H1 (cell line): ENCODE measurements at regions of chr9 and their contacts with region 1.

Region 1: DNA sequence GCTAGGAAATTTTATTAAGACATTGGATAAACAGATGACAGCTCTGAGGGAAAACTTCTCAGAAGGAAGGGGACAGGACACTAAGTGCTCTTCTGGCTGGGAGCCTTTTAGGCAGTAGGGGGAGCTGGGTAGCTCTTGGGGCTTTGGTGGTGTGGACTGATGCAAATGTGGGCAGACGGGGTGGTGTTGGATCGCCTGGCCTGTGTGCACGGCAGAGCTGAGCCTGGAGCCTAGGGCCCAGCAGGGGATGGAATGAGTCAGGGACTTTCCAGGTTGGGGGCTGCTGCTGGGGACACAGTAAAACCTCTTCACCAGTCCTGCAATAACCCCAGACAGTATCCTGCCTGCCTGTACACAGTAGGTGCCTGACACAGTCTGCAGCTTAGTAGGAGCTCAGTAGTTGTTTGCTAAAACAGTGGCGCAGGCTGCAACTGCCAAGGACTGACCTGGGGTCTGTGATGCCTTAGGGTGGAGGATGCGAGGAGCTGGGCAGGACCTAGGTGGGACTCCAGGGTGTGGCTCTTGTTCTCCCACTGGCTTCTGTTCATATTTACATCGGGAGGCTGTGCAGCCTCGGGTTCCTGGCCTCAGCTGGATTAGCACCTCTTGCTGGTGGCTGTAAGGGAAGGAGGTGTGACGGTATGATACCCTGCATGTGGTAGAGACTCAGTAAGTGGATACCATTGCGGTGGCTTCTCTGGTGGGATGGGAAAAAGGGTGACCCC is 83.8 kb downstream of the DAB2IP start:
- DNase-seq: peak; percentile 71
- H3K4me3 ChIP-seq: peak overlapping the region in 3 of 4 experiments; percentile 52 to 73 (median 56); a peak in 5 of 8 replicates
- H3K27ac ChIP-seq: no peak overlapping the region
- H3K4me1 ChIP-seq: peaks cover 12 to 42% (median 34%) of the 10 kb centered on the region in 4 experiments
- H3K27me3 ChIP-seq: peaks cover 0 to 8% (median 4%) of the 10 kb centered on the region in 4 experiments; a peak in 4 of 7 replicates
- CTCF ChIP-seq: peak; percentile 67 to 80 (median 77)
- EP300 ChIP-seq: no peak
- POLR2A ChIP-seq: no peak
- RAD21 ChIP-seq: peak; percentile 65 to 74

Region 2: DNA sequence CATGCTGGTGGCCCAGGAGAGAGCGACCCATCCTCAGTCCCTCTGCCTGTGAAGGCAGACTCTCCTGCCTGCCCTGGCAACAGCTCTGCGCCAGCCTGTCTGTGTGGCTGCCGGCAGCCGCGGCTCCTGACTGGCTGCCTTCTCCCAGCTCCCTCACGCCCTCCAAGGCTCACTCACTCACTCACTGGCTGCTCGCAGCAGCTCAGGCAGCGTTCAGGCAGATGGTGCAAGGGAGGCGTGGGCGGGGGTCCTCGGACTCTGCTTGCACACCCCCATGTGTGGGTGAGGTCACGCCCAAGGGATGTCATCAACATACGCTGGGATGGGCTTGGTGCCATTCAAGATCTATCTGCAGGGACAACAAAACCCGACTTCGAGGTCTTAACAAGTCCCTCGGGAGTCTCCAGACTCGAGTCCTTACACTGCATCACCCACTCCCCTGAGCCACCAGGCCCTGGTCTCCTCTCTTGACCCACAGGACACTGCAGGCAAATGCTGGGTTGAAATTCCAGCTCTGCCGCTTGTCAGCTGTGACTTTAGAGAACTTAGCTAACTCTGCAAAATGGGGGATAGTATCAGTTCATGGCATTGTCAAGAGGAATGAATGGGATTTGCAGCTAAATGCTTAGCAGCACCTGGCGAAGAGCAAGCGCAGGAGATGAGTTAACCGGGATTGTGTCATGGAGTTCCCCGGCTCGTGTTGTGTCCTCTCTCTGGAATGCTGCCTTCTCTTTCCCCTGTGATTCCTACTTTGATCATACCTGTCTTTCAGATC is 17.0 kb before region 1 on chr9:
- CTCF ChIA-PET with region 1: interaction called, 24 read pairs
- POLR2A ChIA-PET with region 1: interaction called, 3 read pairs
- DNase-seq: no peak
- H3K4me3 ChIP-seq: no peak overlapping the region
- H3K27ac ChIP-seq: no peak overlapping the region
- H3K4me1 ChIP-seq: peaks cover 8 to 33% (median 18%) of the 10 kb centered on the region in 4 experiments
- H3K27me3 ChIP-seq: no peaks in the 10 kb centered on the region
- CTCF ChIP-seq: no peak
- EP300 ChIP-seq: no peak
- POLR2A ChIP-seq: no peak
- RAD21 ChIP-seq: no peak

Region 3: DNA sequence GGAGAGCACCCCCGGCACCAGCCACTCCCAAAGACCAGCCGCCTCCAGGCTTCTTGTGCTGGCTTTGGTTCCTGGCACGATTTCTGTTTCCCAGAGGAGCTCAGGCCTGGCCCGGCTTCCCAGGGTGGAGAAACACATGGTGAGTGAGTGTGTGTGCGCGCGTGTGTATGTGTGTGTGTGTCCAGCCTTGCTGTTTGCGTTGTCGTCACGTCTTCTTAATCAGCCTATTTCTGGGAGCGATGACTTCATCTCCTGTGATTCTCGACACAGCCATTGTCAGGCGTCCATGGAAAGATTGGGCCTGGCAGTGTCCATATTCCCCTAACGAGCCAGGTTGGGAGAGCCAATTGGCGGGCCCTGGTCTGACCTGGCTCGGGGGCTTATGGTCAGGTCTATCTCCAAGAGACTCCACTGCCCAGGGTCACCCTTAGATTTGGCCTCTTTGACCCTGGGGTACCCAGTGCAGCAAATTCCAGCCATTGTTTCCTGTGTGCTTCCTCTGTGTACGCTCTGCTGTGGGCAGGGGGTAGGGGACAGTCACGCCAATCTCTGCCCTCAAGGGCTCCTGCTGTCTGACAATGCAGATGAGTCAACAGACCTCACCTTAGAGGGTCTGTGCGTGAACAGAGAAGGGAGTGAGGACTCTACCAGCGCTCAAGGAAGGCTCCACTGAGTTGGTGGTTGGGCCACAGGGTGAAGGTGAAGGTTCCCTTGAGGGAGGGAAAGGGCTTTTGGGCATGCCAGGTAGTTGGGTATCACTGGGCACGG is 10.0 kb before region 1 on chr9:
- CTCF ChIA-PET with region 1: interaction called, 24 read pairs
- POLR2A ChIA-PET with region 1: interaction called, 3 read pairs
- DNase-seq: no peak
- H3K4me3 ChIP-seq: no peak overlapping the region
- H3K27ac ChIP-seq: no peak overlapping the region
- H3K4me1 ChIP-seq: peaks cover 4 to 24% (median 11%) of the 10 kb centered on the region in 4 experiments
- H3K27me3 ChIP-seq: no peaks in the 10 kb centered on the region; a peak in 1 of 7 replicates
- CTCF ChIP-seq: no peak
- EP300 ChIP-seq: no peak
- POLR2A ChIP-seq: no peak
- RAD21 ChIP-seq: no peak

Region 4: GRCh38 chr9:121750715-121751623 is 15.7 kb after region 1 on chr9:
- CTCF ChIA-PET with region 1: interaction called, 21 read pairs
- POLR2A ChIA-PET with region 1: interaction called, 6 read pairs
- DNase-seq: no peak
- H3K4me3 ChIP-seq: no peak overlapping the region
- H3K27ac ChIP-seq: no peak overlapping the region
- H3K4me1 ChIP-seq: no peaks in the 10 kb centered on the region; a peak in 3 of 7 replicates
- H3K27me3 ChIP-seq: no peaks in the 10 kb centered on the region; a peak in 1 of 7 replicates
- CTCF ChIP-seq: no peak
- EP300 ChIP-seq: no peak
- POLR2A ChIP-seq: no peak
- RAD21 ChIP-seq: no peak

Region 5: GRCh38 chr9:121765021-121765950 is 30.1 kb after region 1 on chr9:
- CTCF ChIA-PET with region 1: interaction called, 13 read pairs
- POLR2A ChIA-PET with region 1: interaction called, 4 read pairs
- DNase-seq: no peak
- H3K4me3 ChIP-seq: no peak overlapping the region
- H3K27ac ChIP-seq: no peak overlapping the region
- H3K4me1 ChIP-seq: peaks cover 0 to 2% (median 0%) of the 10 kb centered on the region in 4 experiments; a peak in 2 of 7 replicates
- H3K27me3 ChIP-seq: no peaks in the 10 kb centered on the region
- CTCF ChIP-seq: no peak
- EP300 ChIP-seq: no peak
- POLR2A ChIP-seq: no peak
- RAD21 ChIP-seq: no peak

Region 6: DNA sequence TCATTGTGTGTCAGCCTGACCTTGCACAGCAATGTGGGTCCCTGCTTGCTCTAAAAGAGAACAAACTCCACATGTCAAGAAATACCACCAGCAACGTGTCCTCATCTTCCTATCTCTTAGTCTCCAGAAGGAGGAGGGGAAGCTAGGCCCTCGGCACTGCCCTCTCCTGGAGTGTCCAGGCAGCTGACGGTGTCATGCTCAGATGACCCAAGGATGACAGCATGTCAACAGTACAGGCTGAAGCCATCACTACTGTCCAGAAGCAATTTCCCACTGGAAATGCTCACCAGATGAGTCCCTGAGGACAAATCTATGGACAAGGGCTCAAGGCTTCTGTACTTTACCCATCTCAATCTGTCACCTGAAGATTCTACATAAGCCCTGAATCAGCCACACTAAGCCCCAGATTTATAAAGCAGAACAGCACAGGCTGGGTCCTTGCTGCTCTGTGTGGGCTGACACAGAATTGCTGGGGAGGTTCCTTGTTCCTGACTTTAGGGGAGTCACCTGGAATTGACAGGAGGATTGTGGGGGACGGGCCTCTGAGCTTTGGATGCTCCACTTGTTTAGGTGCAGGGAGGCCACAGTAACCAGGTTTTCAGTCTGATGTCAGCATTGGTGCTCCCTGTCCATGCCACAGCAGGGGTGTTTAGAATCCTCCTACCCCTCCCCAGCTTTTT is 126.4 kb after region 1 on chr9:
- CTCF ChIA-PET with region 1: interaction called, 14 read pairs
- POLR2A ChIA-PET with region 1: no interaction called
- DNase-seq: peak in 1 of 2 experiments; percentile 57
- H3K4me3 ChIP-seq: no peak overlapping the region
- H3K27ac ChIP-seq: no peak overlapping the region
- H3K4me1 ChIP-seq: peaks cover 0 to 8% (median 2%) of the 10 kb centered on the region in 4 experiments; a peak in 6 of 7 replicates
- H3K27me3 ChIP-seq: no peaks in the 10 kb centered on the region
- CTCF ChIP-seq: peak; percentile 81 to 91 (median 91)
- EP300 ChIP-seq: no peak
- POLR2A ChIP-seq: no peak
- RAD21 ChIP-seq: peak; percentile 64 to 77